MCF 10A (cell line): ENCODE measurements at regions of chr5 and their contacts with region 1.

Region 1: GRCh38 chr5:77143998-77144836 is 57.1 kb upstream of the ZBED3 start:
- DNase-seq: peak; percentile 76
- H3K4me3 Mint-ChIP-seq: no peak overlapping the region
- H3K27ac Mint-ChIP-seq: no peak overlapping the region
- H3K4me1 Mint-ChIP-seq: peaks cover 22% of the 10 kb centered on the region
- H3K27me3 Mint-ChIP-seq: no peaks in the 10 kb centered on the region
- CTCF ChIP-seq: peak; percentile 74

Region 2: DNA sequence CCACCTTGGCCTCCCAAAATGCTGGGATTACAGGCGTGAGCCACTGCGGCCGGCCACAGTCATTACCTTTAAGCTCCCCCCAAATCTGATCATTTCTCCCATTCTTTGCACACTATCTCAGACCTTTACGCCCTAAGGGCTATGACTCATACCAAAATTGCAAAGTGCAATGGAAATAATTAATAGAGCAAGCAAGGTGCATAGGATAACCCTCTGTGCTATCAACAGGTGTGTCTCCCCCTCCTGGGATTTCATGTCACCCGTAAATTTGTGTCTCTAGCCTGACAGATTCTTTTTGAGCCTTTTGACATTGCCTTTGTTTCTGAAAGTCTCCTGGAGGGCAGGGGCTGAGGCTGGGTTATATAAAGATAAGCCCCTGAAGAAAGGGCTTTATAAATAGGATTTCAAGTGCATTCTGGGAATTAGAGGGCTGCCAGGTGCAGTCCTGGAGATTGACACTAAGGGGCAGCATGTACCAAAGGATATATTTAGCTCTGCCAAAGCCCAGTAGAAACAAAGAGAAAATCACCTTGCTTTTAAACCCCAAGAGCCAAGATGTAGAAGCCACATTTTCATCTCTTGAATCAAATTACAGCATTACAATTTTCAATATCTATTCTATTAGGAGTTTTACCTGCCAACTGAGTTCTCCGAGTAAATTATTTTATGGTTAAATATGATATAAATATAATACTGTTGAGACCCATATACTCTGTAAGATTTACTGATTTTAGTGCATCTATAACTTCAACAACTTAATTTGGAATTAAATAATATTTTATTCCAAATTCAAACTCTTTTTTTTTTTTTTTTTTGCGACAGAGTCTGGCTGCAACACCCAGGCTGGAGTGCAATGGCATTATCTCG is 276.2 kb before region 1 on chr5:
- CTCF ChIA-PET with region 1: interaction called, 3 read pairs
- POLR2A ChIA-PET with region 1: no interaction called
- intact Hi-C with region 1: loop called (anchors 1 kb)
- DNase-seq: peak; percentile 74
- H3K4me3 Mint-ChIP-seq: no peak overlapping the region
- H3K27ac Mint-ChIP-seq: no peak overlapping the region
- H3K4me1 Mint-ChIP-seq: no peaks in the 10 kb centered on the region
- H3K27me3 Mint-ChIP-seq: no peaks in the 10 kb centered on the region
- CTCF ChIP-seq: peak; percentile 87

Region 3: DNA sequence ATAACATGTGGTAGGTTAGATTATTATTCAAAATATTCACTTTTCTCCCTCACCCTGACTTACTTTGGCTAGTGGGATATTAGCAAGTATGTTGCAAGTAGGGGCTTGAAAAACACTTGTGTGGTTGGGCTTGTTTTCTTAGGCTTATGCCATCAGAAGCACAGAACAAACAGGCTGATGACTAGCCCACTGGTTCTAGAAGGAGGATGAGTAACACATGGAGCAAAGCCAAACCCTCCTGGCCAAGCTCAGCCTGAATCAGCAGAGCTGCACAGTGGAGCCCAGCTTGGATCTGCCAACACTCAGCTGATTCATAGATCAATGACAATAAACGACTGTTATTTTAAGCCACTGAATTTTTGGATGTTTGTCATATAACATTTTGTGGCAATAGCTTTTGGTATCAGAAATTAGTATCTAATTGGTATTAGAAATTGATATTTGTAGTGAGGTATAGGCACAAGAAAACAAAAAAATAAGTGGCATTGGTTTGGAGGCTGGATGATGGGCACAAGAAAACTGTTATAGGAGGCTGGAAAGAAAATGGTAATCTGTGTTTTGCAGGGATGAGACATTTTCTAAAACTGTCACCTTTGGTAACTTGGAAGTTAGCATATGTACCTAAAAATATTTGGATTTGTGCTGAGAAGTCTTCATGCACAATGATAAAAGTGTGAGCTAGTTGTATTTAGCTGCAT is 11.0 kb before region 1 on chr5:
- CTCF ChIA-PET with region 1: interaction called, 25 read pairs
- POLR2A ChIA-PET with region 1: interaction called, 7 read pairs
- intact Hi-C with region 1: no loop called
- DNase-seq: peak; percentile 99
- H3K4me3 Mint-ChIP-seq: no peak overlapping the region
- H3K27ac Mint-ChIP-seq: peak overlapping the region; percentile 14
- H3K4me1 Mint-ChIP-seq: peaks cover 20% of the 10 kb centered on the region
- H3K27me3 Mint-ChIP-seq: no peaks in the 10 kb centered on the region
- CTCF ChIP-seq: no peak

Region 4: GRCh38 chr5:77168161-77168875 is 24.1 kb after region 1 on chr5:
- CTCF ChIA-PET with region 1: interaction called, 11 read pairs
- POLR2A ChIA-PET with region 1: interaction called, 3 read pairs
- intact Hi-C with region 1: no loop called
- DNase-seq: peak; percentile 70
- H3K4me3 Mint-ChIP-seq: no peak overlapping the region
- H3K27ac Mint-ChIP-seq: peak overlapping the region; percentile 39
- H3K4me1 Mint-ChIP-seq: peaks cover 13% of the 10 kb centered on the region
- H3K27me3 Mint-ChIP-seq: no peaks in the 10 kb centered on the region
- CTCF ChIP-seq: no peak

Region 5: DNA sequence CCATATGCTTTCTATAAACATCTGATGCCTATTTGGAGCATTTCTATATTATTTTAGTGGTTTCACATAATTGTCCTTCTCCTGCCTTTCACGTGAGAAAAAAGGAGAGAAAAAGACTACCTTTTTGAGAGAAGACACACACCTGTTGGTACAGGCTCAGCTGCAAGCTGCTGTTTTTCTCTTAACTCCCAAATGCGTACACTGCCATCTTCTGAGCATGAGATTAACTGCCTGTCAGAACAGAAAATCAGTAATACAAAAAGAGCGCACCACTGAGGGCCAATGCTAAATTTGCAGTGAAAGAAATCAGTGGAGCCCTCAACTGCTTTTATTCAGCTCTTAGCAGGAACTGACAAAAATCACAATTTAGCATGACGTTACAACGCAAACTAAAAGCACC is 293.0 kb after region 1 on chr5:
- CTCF ChIA-PET with region 1: interaction called, 16 read pairs
- POLR2A ChIA-PET with region 1: interaction called, 6 read pairs
- intact Hi-C with region 1: loop called (anchors 1 kb)
- DNase-seq: no peak
- H3K4me3 Mint-ChIP-seq: no peak overlapping the region
- H3K27ac Mint-ChIP-seq: no peak overlapping the region
- H3K4me1 Mint-ChIP-seq: no peaks in the 10 kb centered on the region
- H3K27me3 Mint-ChIP-seq: no peaks in the 10 kb centered on the region
- CTCF ChIP-seq: no peak